ENCODE measurements at regions of chr3 and their contacts with region 1.

Region 1: DNA sequence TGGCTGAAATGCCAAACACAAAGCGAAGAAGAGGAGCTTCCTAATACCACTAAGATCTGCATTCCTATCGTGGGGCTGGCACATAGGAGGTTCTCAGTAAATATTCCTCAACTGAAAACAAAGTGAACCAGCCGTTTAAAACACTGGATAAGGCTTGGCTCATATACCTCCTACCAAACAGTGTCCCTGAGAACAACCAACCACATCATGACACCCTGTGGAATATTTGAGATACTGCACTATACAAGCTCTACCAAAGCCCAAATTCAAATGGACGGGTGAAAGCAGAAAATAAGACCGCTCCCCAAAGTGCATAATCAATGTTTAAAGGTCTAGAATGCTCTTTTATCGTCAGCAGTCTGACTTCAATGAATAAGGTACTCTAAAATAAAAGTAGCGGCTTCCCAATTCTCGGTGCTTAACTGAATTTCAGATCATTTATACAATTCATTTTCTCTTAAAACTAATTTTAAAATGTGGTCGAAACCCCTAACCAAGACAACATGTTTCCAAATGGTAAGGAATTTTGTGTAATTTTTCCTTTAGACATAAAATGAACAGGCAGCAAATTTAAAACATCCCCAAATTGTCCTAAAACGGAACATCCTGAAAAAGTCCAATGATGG is 425.8 kb downstream of the ERC2 start:
- DNase-seq: peak; percentile 61
- ATAC-seq: peak; percentile 97
- H3K4me3 ChIP-seq: no peak overlapping the region
- H3K27ac ChIP-seq: no peak overlapping the region
- H3K4me1 ChIP-seq: no peaks in the 10 kb centered on the region
- H3K27me3 ChIP-seq: peaks cover 6% of the 10 kb centered on the region
- CTCF ChIP-seq: peak; percentile 58
- POLR2A ChIP-seq: no peak
- RAD21 ChIP-seq: peak; percentile 66

Region 2: GRCh38 chr3:54427941-54428871 is 1614.2 kb before region 1 on chr3:
- CTCF ChIA-PET with region 1: no interaction called
- POLR2A ChIA-PET with region 1: no interaction called
- dilution Hi-C with region 1: no loop called
- in situ Hi-C with region 1: loop called (anchors 10 kb)
- intact Hi-C with region 1: loop called (anchors 1 kb)
- DNase-seq: peak; percentile 76
- ATAC-seq: peak; percentile 90
- H3K4me3 ChIP-seq: no peak overlapping the region
- H3K27ac ChIP-seq: no peak overlapping the region
- H3K4me1 ChIP-seq: no peaks in the 10 kb centered on the region
- H3K27me3 ChIP-seq: no peaks in the 10 kb centered on the region
- CTCF ChIP-seq: peak; percentile 88
- POLR2A ChIP-seq: no peak
- RAD21 ChIP-seq: peak; percentile 83

Region 3: GRCh38 chr3:54853573-54854404 is 1188.7 kb before region 1 on chr3:
- CTCF ChIA-PET with region 1: no interaction called
- POLR2A ChIA-PET with region 1: no interaction called
- dilution Hi-C with region 1: no loop called
- in situ Hi-C with region 1: loop called (anchors 10 kb)
- intact Hi-C with region 1: loop called (anchors 1 kb)
- DNase-seq: peak; percentile 74
- ATAC-seq: peak; percentile 98
- H3K4me3 ChIP-seq: no peak overlapping the region
- H3K27ac ChIP-seq: peak overlapping the region; percentile 79
- H3K4me1 ChIP-seq: peaks cover 8% of the 10 kb centered on the region
- H3K27me3 ChIP-seq: peaks cover 5% of the 10 kb centered on the region; the same call in 1 of the 2 replicates
- CTCF ChIP-seq: peak; percentile 83
- POLR2A ChIP-seq: no peak
- RAD21 ChIP-seq: peak; percentile 93

Region 4: GRCh38 chr3:54951405-54951804 is 1091.0 kb before region 1 on chr3:
- CTCF ChIA-PET with region 1: no interaction called
- POLR2A ChIA-PET with region 1: no interaction called
- dilution Hi-C with region 1: no loop called
- in situ Hi-C with region 1: no loop called
- intact Hi-C with region 1: loop called (anchors 1 kb)
- DNase-seq: peak; percentile 93
- ATAC-seq: peak; percentile 89
- H3K4me3 ChIP-seq: no peak overlapping the region
- H3K27ac ChIP-seq: peak overlapping the region; percentile 29
- H3K4me1 ChIP-seq: peaks cover 18% of the 10 kb centered on the region
- H3K27me3 ChIP-seq: no peaks in the 10 kb centered on the region
- CTCF ChIP-seq: peak; percentile 92
- POLR2A ChIP-seq: peak; percentile 53; the same call in 1 of the 2 replicates
- RAD21 ChIP-seq: peak; percentile 99

Region 5: DNA sequence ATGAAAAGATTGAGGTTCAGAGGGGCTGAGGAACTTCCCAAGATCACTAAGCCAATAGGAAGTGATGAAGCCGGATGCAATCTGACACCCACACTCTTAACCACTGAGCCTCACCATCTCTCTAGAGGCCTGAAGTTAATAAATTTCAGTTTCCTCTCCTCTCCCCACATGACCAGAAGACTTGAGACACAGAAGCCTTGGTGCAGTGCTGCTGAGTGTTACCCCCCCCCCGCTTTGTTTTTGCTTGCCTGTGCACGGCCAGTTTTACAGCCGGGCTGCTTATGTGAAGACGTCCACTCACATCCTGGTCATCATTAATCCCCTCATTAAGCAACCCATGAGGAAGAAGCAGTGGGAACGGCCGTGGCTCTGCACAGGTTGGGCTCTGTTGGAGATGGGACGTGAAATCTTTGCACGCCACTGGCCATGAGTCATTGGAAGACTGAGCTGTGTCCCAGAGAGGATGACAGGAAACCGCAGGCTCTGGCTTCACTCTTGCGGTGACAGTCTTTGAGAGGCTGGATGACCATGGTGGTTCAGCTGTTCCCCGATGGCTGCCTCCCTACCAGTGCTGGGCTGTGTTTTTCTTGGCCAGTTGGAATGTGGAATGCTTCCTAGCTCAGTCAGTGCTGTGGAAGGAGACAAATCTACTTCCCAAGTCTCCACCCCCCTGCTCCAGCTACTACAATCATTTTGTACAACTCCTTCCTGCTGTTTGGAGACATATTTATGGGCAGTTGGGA is 882.0 kb before region 1 on chr3:
- CTCF ChIA-PET with region 1: no interaction called
- POLR2A ChIA-PET with region 1: no interaction called
- dilution Hi-C with region 1: no loop called
- in situ Hi-C with region 1: no loop called
- intact Hi-C with region 1: loop called (anchors 10 kb)
- DNase-seq: peak; percentile 100
- ATAC-seq: peak; percentile 86
- H3K4me3 ChIP-seq: no peak overlapping the region
- H3K27ac ChIP-seq: peak overlapping the region; percentile 88
- H3K4me1 ChIP-seq: peaks cover 21% of the 10 kb centered on the region
- H3K27me3 ChIP-seq: no peaks in the 10 kb centered on the region
- CTCF ChIP-seq: no peak
- POLR2A ChIP-seq: peak; percentile 45; the same call in 1 of the 2 replicates
- RAD21 ChIP-seq: peak; percentile 36; the same call in 1 of the 2 replicates